ENCODE measurements at regions of chr13 and their contacts with region 1.

Region 1: GRCh38 chr13:45464687-45465453 is at the start of gene COG3:
- DNase-seq: peak; percentile 92 to 95
- H3K4me3 ChIP-seq: peak within 1 kb of the TSS; percentile 83
- H3K27ac ChIP-seq: peak within 1 kb of the TSS; percentile 75
- H3K4me1 ChIP-seq: peaks cover 39% of the 10 kb centered on the region
- H3K27me3 ChIP-seq: no peaks in the 10 kb centered on the region
- CTCF ChIP-seq: no peak
- total RNA-seq, gene COG3: 20.4 and 22.3 TPM in 2 replicates

Region 2: GRCh38 chr13:45332036-45332830 is 132.6 kb before region 1 on chr13:
- CTCF ChIA-PET with region 1: no interaction called
- POLR2A ChIA-PET with region 1: interaction called, 3 read pairs
- intact Hi-C with region 1: loop called (anchors 5 kb)
- DNase-seq: peak; percentile 49 to 88
- H3K4me3 ChIP-seq: no peak overlapping the region
- H3K27ac ChIP-seq: peak overlapping the region; percentile 66
- H3K4me1 ChIP-seq: peaks cover 84% of the 10 kb centered on the region
- H3K27me3 ChIP-seq: no peaks in the 10 kb centered on the region
- CTCF ChIP-seq: no peak

Region 3: GRCh38 chr13:45393941-45394570 is 70.8 kb before region 1 on chr13:
- CTCF ChIA-PET with region 1: no interaction called
- POLR2A ChIA-PET with region 1: interaction called, 15 read pairs
- intact Hi-C with region 1: no loop called
- DNase-seq: peak; percentile 59 to 61
- H3K4me3 ChIP-seq: no peak overlapping the region
- H3K27ac ChIP-seq: no peak overlapping the region
- H3K4me1 ChIP-seq: no peaks in the 10 kb centered on the region
- H3K27me3 ChIP-seq: no peaks in the 10 kb centered on the region
- CTCF ChIP-seq: peak; percentile 74

Region 4: GRCh38 chr13:45417790-45418534 is 46.9 kb before region 1 on chr13 and contains the start of gene SLC25A30:
- CTCF ChIA-PET with region 1: no interaction called
- POLR2A ChIA-PET with region 1: no interaction called
- intact Hi-C with region 1: loop called (anchors 2 kb)
- DNase-seq: peak; percentile 82 to 96
- H3K4me3 ChIP-seq: peak within 1 kb of the TSS; percentile 63
- H3K27ac ChIP-seq: peak within 1 kb of the TSS; percentile 59
- H3K4me1 ChIP-seq: peaks cover 11% of the 10 kb centered on the region
- H3K27me3 ChIP-seq: no peaks in the 10 kb centered on the region
- CTCF ChIP-seq: no peak
- total RNA-seq, gene SLC25A30: 11.2 and 12.5 TPM in 2 replicates